Activated CD8-positive, alpha-beta T cell treated with anti-CD3 and anti-CD28 coated beads, Interleukin-2, amount 10 ng/mL, durations not matched to agents 7 days and 5 days (primary cell): ENCODE measurements at regions of chr17 and their contacts with region 1.

Region 1: DNA sequence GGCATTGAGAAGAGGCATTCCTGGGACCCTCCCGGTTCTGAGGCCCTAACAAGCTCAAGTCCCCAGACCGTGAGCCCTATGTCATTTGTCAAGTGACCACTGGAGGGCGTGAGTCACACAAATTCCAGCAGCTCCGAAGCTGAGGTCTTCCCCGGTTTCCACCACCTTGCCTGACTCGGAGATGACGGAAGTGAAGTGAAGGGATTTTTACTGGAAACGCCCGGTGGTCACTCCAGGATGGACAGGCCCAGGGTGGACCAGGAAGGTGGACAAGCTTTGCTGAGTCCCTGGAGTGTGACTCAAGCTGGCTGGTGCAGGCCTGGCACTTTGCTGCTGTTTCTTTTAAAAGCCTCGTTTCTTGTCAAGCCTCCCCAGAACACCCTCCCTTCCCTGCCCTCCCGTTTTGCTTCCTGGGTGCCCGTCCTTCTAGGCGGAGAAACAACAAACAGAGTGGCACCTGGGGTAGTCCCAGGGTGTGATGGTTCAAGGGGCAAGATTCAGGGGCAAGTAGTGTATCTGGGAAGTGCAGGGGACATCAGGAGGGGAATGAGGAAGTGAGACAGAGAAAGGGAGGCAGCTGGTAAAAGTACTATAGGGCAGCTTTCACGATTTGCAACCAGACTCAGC is 5.3 kb upstream of the NOS2 start:
- DNase-seq: peak; percentile 88
- ATAC-seq: peak; percentile 73
- H3K4me3 Mint-ChIP-seq: peak overlapping the region; percentile 55
- H3K27ac Mint-ChIP-seq: peak overlapping the region; percentile 96
- H3K4me1 Mint-ChIP-seq: peaks cover 46% of the 10 kb centered on the region
- H3K27me3 Mint-ChIP-seq: peaks cover under 1% of the 10 kb centered on the region

Region 2: DNA sequence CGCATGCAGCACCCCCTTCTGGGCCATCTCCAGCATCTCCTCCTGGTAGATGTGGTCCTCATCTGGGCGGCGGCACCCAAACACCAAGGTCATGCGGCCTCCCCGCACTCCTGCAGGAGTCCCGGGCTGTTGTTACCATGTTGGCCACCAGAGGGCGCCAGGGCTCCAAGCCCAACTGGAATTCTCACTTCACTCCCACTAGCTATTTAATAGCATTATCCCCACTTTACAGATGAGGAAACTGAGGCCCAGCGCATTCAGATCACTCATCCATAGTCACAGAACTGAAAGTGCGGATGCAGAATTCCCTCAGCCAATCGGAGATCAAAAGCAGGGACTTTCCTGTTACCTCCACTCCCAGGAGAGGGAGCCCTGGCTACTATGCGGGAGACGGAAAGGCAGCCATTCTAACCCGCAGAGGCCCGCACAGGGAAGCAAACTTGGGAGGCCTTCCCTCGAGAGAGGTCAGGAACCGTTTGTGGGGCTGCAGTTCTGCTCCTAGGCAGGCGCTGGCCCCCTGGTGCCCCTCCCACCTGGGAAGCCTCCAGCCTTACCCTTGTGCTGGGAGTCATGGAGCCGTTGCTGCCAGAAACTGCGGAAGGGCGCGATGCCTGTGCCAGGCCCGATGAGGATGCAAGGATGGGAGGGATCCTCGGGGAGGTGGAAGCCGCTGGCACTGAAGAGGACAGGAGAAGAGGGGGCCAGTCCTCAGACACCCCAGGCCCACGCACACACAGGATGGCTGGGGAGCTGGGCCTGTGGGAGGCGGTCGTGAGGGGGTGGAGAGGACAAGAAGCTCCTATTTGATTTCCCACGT is 45.4 kb before region 1 on chr17:
- CTCF ChIA-PET with region 1: interaction called, 15 read pairs
- POLR2A ChIA-PET with region 1: no interaction called
- DNase-seq: peak; percentile 73
- ATAC-seq: peak; percentile 59
- H3K4me3 Mint-ChIP-seq: no peak overlapping the region
- H3K27ac Mint-ChIP-seq: no peak overlapping the region
- H3K4me1 Mint-ChIP-seq: no peaks in the 10 kb centered on the region
- H3K27me3 Mint-ChIP-seq: no peaks in the 10 kb centered on the region

Region 3: DNA sequence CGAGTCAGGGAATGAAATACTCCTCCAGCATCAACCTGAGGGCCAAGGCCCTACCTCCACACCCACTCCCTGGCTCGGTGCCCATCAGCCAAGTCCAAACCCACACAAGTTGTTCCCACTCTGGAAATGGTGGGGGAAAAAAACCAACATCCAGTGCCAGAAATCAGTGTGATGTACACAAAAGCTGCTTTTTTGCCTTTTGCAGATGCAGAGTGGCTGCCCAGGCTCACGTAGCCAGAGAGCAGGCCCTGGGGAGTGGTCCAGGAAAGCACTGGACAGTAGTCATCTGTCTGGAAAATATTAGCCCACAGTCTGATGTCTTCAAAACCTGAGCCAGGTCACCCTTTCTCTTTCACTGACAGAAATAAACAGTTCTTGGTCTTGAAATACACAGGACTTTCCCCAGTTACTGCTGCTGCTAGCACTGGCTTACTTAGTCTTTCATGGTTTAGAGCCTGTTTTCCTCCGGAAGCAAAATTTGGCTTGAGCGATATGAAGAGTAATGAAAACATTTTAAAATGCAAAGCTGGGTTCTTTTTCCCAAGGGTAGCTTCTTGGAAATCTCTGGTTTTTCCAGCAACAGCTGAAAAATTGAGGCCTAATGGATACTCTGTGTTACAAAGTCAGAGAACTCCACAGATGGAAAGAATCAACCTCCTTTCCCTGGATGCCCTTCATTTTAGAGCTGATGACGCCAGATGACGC is 12.9 kb after region 1 on chr17:
- CTCF ChIA-PET with region 1: interaction called, 12 read pairs
- POLR2A ChIA-PET with region 1: interaction called, 5 read pairs
- DNase-seq: no peak
- ATAC-seq: no peak
- H3K4me3 Mint-ChIP-seq: no peak overlapping the region
- H3K27ac Mint-ChIP-seq: no peak overlapping the region
- H3K4me1 Mint-ChIP-seq: no peaks in the 10 kb centered on the region
- H3K27me3 Mint-ChIP-seq: no peaks in the 10 kb centered on the region

Region 4: GRCh38 chr17:27856676-27857432 is 51.2 kb after region 1 on chr17:
- CTCF ChIA-PET with region 1: interaction called, 22 read pairs
- POLR2A ChIA-PET with region 1: interaction called, 5 read pairs
- DNase-seq: no peak
- ATAC-seq: no peak
- H3K4me3 Mint-ChIP-seq: no peak overlapping the region
- H3K27ac Mint-ChIP-seq: no peak overlapping the region
- H3K4me1 Mint-ChIP-seq: peaks cover 11% of the 10 kb centered on the region
- H3K27me3 Mint-ChIP-seq: peaks cover 16% of the 10 kb centered on the region

Region 5: DNA sequence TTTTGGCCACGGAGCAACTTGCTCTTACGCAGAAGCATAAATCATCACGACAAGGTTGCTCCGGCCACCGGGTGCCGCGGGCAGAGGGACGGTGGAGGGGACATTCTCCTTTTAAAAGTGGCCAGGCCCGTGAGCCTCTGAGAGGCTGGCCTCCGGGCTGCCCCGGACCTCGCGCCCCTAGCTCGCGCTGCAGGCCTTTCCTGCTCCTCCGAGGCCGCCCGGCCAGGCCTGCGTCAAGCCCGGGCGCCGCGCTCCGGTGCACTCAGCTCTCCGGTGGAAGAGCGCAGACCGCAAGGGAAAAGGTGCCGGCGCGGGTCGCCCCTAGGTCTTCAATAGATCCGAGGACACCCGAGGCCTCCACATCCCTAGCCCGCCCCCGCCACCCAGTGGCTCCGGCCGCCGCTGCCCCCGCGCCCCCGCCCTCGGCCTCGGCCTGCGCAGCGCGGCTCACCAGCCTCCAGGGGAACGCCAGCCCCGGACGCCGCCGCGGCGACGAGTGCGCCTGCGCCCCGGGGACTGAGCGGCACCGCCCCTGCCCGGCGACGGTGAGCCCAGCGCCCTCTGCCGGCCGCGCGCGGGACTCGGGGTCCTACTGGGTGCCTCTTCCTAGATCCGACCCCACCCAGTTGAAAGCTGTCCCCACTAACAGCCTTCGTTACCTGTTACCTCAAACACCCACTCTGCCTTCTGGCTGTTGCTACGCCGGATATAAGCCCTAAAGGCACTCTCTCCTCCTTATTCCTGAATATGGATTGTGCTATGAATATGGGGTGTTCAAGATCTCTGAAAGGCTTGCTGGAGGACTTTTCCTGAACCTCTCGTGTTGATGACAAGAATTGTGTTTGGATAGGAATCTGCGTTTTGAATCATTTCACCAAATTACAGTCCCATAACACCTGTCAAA is 87.5 kb after region 1 on chr17 and contains the start of gene LYRM9:
- CTCF ChIA-PET with region 1: interaction called, 198 read pairs
- POLR2A ChIA-PET with region 1: interaction called, 37 read pairs
- DNase-seq: peak; percentile 93
- ATAC-seq: peak; percentile 99
- H3K4me3 Mint-ChIP-seq: peak within 1 kb of the TSS; percentile 77
- H3K27ac Mint-ChIP-seq: peak within 1 kb of the TSS; percentile 49
- H3K4me1 Mint-ChIP-seq: peaks cover 23% of the 10 kb centered on the region
- H3K27me3 Mint-ChIP-seq: peaks cover 22% of the 10 kb centered on the region
- total RNA-seq, gene LYRM9: 1.6 to 3.6 TPM